ENCODE measurements at regions of chr3 and their contacts with region 1.

Region 1: GRCh38 chr3:112642912-112643506 is 2.1 kb upstream of the CCDC80 start:
- DNase-seq: peak; percentile 83 to 87
- H3K4me3 ChIP-seq: no peak overlapping the region
- H3K4me3 Mint-ChIP-seq: peak overlapping the region; percentile 15
- H3K27ac Mint-ChIP-seq: peak overlapping the region; percentile 13
- H3K4me1 ChIP-seq: peaks cover 38% of the 10 kb centered on the region
- H3K4me1 Mint-ChIP-seq: peaks cover 23% of the 10 kb centered on the region
- H3K27me3 ChIP-seq: no peaks in the 10 kb centered on the region
- H3K27me3 Mint-ChIP-seq: no peaks in the 10 kb centered on the region
- CTCF ChIP-seq: peak; percentile 73 to 82

Region 2: DNA sequence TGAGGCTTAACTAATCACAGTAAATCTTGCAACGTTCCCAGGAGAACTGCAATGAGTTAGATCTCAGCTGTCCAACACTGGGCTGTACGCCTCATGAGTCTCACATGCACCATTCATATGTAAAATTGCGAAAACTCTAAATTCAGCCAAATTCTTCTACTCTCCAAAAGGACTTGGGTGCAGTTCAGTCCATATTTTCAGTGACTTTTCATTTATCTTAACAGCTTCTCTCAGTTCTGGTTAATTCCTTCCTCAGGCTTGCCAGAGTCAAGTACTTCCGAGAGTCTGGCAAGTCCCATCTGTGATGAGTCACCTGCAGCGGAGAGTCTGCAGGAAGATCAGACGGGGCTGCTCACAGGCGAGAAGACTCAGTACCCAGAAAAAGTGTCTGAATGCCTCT is 13.6 kb before region 1 on chr3:
- CTCF ChIA-PET with region 1: no interaction called
- POLR2A ChIA-PET with region 1: no interaction called
- intact Hi-C with region 1: loop called (anchors 1 kb)
- DNase-seq: no peak
- H3K4me3 ChIP-seq: no peak overlapping the region
- H3K4me3 Mint-ChIP-seq: no peak overlapping the region
- H3K27ac Mint-ChIP-seq: no peak overlapping the region
- H3K4me1 ChIP-seq: peaks cover 32% of the 10 kb centered on the region
- H3K4me1 Mint-ChIP-seq: peaks cover 19% of the 10 kb centered on the region
- H3K27me3 ChIP-seq: no peaks in the 10 kb centered on the region
- H3K27me3 Mint-ChIP-seq: no peaks in the 10 kb centered on the region
- CTCF ChIP-seq: no peak

Region 3: DNA sequence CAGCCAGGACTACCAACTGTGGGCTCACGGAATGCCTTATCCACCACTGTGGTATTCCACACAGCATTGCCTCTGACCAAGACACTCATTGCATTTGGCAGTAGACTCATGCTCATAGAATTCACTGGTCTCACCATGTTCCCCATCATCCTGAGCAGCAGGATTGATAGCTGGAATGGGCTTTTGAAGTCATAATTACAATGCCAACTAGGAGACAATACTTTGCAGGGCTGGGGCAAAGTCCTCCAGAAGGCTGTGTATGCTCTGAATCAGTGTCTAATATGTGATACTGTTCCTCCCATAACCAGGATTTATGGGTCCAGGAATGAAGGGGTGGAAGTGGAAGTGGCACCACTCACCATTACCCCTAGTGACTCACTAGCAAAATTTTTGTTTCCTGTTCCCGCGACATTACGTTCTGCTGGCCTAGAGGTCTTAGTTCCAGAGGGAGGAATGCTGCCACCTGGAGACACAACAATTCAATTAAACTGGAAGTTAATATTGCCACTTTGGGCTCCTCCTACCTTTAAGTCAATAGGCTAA is 56.5 kb after region 1 on chr3:
- CTCF ChIA-PET with region 1: no interaction called
- POLR2A ChIA-PET with region 1: no interaction called
- intact Hi-C with region 1: loop called (anchors 1 kb)
- DNase-seq: no peak
- H3K4me3 ChIP-seq: no peak overlapping the region
- H3K4me3 Mint-ChIP-seq: no peak overlapping the region
- H3K27ac Mint-ChIP-seq: no peak overlapping the region
- H3K4me1 ChIP-seq: no peaks in the 10 kb centered on the region
- H3K4me1 Mint-ChIP-seq: no peaks in the 10 kb centered on the region
- H3K27me3 ChIP-seq: no peaks in the 10 kb centered on the region
- H3K27me3 Mint-ChIP-seq: no peaks in the 10 kb centered on the region
- CTCF ChIP-seq: no peak

Region 4: GRCh38 chr3:112814266-112814665 is 171.3 kb after region 1 on chr3:
- CTCF ChIA-PET with region 1: interaction called, 17 read pairs
- POLR2A ChIA-PET with region 1: interaction called, 3 read pairs
- intact Hi-C with region 1: loop called (anchors 1 kb)
- DNase-seq: peak in 1 of 2 experiments; percentile 12
- H3K4me3 ChIP-seq: no peak overlapping the region
- H3K4me3 Mint-ChIP-seq: no peak overlapping the region
- H3K27ac Mint-ChIP-seq: no peak overlapping the region
- H3K4me1 ChIP-seq: no peaks in the 10 kb centered on the region
- H3K4me1 Mint-ChIP-seq: no peaks in the 10 kb centered on the region
- H3K27me3 ChIP-seq: no peaks in the 10 kb centered on the region
- H3K27me3 Mint-ChIP-seq: no peaks in the 10 kb centered on the region
- CTCF ChIP-seq: peak; percentile 28 to 48

Region 5: GRCh38 chr3:112990672-112991602 is 347.9 kb after region 1 on chr3 and contains the start of gene GTPBP8:
- CTCF ChIA-PET with region 1: no interaction called
- POLR2A ChIA-PET with region 1: no interaction called
- intact Hi-C with region 1: loop called (anchors 5 kb)
- DNase-seq: peak; percentile 92 to 94
- H3K4me3 ChIP-seq: peak within 1 kb of the TSS; percentile 59
- H3K4me3 Mint-ChIP-seq: peak within 1 kb of the TSS; percentile 87
- H3K27ac Mint-ChIP-seq: peak within 1 kb of the TSS; percentile 94
- H3K4me1 ChIP-seq: peaks cover 16% of the 10 kb centered on the region; the same call in 1 of the 2 replicates
- H3K4me1 Mint-ChIP-seq: peaks cover 15% of the 10 kb centered on the region
- H3K27me3 ChIP-seq: no peaks in the 10 kb centered on the region
- H3K27me3 Mint-ChIP-seq: no peaks in the 10 kb centered on the region
- CTCF ChIP-seq: no peak
- total RNA-seq, gene GTPBP8: 18.3 and 19.5 TPM in 2 replicates

Measured in Caco-2 (cell line).